Activated naive CD4-positive, alpha-beta T cell treated with anti-CD3 and anti-CD28 coated beads for 36 hours (primary cell): ENCODE measurements at regions of chr22 and their contacts with region 1.

Region 1: DNA sequence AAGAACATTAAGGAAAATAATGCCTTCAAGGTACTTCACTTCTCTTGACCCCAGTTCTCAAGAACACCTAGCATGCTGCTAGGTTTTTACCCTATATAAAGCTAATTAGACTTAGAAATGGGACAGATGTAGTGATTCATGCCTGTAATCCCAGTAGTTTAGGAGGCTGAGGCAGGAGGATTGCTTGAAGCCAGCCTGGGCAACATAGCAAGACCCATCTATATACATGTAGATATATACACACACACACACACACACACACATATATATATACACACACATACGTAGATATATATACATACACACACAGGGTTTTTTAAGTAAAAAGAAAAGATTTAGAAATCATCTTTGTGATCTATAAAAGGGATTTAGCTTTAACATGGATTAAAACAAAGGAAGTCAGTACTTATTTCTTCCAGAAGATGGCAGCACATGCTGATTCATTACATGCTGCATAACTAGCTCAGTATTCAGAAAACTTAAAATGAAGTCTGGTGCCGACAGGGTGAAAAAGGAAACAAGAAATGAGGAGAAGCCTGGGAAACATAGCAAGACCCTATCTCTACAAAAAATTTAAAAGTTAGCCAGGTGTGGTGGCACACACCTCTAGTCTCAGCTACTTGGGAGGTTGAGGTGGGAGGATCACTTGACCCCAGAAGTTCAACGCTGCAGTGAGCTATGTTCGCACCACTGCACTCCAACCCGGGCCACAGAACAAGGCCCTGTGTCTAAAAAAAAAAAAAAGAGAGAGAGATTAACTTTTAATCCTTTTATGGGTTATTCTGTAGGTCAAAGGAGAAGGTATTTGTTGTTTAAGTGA is 28.5 kb upstream of the RBX1 start:
- DNase-seq: peak; percentile 8
- H3K4me3 Mint-ChIP-seq: no peak overlapping the region
- H3K27ac Mint-ChIP-seq: no peak overlapping the region
- H3K4me1 Mint-ChIP-seq: peaks cover 4% of the 10 kb centered on the region
- H3K27me3 Mint-ChIP-seq: no peaks in the 10 kb centered on the region

Region 2: DNA sequence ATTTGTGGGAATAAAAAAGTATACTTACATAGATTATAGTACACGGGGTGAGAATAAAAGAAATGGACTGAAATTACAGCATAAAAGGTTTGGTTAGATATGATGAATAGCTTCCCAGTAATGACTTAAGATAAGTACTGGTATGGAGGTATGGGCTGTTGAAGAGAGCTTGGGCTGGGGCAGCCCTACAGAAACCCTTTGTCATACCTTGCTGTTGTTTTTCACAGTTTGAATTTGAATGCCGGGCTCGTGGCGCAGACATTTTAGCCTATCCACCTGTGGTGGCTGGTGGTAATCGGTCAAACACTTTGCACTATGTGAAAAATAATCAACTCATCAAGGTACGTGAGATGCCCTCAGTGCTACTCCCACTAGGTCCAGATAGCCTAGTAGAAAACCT is 13.8 kb before region 1 on chr22:
- CTCF ChIA-PET with region 1: interaction called, 12 read pairs
- intact Hi-C with region 1: no loop called
- DNase-seq: no peak
- H3K4me3 Mint-ChIP-seq: no peak overlapping the region
- H3K27ac Mint-ChIP-seq: no peak overlapping the region
- H3K4me1 Mint-ChIP-seq: no peaks in the 10 kb centered on the region
- H3K27me3 Mint-ChIP-seq: no peaks in the 10 kb centered on the region

Region 3: DNA sequence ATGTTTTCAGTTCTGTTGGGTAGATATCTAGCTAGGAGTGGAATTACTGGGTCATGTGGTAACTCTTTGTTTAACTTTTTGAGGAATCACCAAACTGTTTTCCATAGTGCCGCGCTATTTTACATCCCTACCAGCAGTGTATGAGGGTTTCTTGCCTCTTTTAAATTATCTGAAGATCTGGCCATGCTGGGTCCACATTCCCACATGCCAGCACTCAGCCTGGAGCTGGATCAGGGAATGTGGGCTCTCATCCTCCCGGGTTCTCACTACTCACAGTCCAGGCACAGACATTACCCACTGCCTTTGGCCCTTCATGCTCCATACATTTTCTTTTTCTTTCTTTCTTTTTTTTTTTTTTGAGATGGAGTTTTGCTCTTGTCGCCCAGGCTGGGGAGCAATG is 73.1 kb after region 1 on chr22:
- CTCF ChIA-PET with region 1: interaction called, 10 read pairs
- intact Hi-C with region 1: no loop called
- DNase-seq: no peak
- H3K4me3 Mint-ChIP-seq: no peak overlapping the region
- H3K27ac Mint-ChIP-seq: no peak overlapping the region
- H3K4me1 Mint-ChIP-seq: no peaks in the 10 kb centered on the region
- H3K27me3 Mint-ChIP-seq: peaks cover under 1% of the 10 kb centered on the region

Region 4: GRCh38 chr22:41146573-41146972 is 223.9 kb after region 1 on chr22:
- CTCF ChIA-PET with region 1: interaction called, 4 read pairs
- intact Hi-C with region 1: loop called (anchors 5 kb)
- DNase-seq: no peak
- H3K4me3 Mint-ChIP-seq: no peak overlapping the region
- H3K27ac Mint-ChIP-seq: no peak overlapping the region
- H3K4me1 Mint-ChIP-seq: no peaks in the 10 kb centered on the region
- H3K27me3 Mint-ChIP-seq: no peaks in the 10 kb centered on the region

Region 5: GRCh38 chr22:41217553-41218157 is 295.0 kb after region 1 on chr22:
- CTCF ChIA-PET with region 1: interaction called, 5 read pairs
- intact Hi-C with region 1: loop called (anchors 5 kb)
- DNase-seq: peak; percentile 84
- H3K4me3 Mint-ChIP-seq: peak overlapping the region; percentile 63
- H3K27ac Mint-ChIP-seq: peak overlapping the region; percentile 90
- H3K4me1 Mint-ChIP-seq: peaks cover 28% of the 10 kb centered on the region
- H3K27me3 Mint-ChIP-seq: no peaks in the 10 kb centered on the region

Region 6: GRCh38 chr22:41237707-41238569 is 315.2 kb after region 1 on chr22:
- CTCF ChIA-PET with region 1: interaction called, 97 read pairs
- intact Hi-C with region 1: loop called (anchors 1 kb)
- DNase-seq: peak; percentile 91
- H3K4me3 Mint-ChIP-seq: peak overlapping the region; percentile 45
- H3K27ac Mint-ChIP-seq: no peak overlapping the region
- H3K4me1 Mint-ChIP-seq: peaks cover 9% of the 10 kb centered on the region
- H3K27me3 Mint-ChIP-seq: no peaks in the 10 kb centered on the region